Panc1 (cell line): ENCODE measurements at regions of chr10 and their contacts with region 1.

Region 1: DNA sequence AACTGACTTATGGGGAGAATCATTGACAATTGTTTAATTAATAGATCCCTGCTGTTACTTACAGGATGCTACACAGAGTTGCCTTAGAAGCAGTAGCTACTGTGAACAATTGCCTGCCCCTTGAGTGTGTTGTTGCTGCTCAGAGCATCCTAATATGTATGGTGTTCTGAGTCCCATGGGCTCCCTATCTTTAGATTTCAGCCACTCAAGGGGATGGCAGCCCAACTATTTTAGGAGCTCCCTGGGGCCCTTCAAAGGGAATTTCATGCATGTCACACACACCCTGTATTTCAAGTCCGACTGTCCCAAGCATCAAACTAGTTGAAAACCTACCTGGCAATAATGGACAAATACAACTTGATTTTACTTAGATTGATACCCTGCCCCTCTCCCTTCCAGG is 111.2 kb downstream of the NOC3L start:
- DNase-seq: no peak
- ATAC-seq: no peak
- H3K4me3 ChIP-seq: no peak overlapping the region
- H3K27ac ChIP-seq: no peak overlapping the region
- H3K4me1 ChIP-seq: no peaks in the 10 kb centered on the region
- H3K27me3 ChIP-seq: no peaks in the 10 kb centered on the region
- CTCF ChIP-seq: no peak

Region 2: DNA sequence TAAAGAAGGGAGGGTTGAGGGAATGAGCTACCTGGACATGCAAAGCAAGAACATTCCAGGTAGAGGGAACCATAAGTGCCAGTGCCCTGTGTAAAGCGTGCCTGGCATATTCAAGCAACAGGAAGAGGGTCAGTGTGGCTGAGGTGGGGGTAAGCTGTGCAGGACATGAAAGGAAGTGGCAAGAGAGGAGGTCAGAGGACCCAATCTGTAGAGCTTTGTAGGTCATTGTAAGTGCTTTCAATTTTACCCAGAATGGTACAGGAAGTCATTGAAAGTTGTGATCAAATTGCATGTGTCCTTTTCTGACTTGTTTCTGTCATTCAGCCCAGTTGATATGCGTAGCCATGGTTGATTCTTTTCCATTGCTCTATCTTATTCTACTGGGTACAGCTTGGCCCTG is 45.4 kb before region 1 on chr10:
- CTCF ChIA-PET with region 1: interaction called, 10 read pairs
- POLR2A ChIA-PET with region 1: no interaction called
- in situ Hi-C with region 1: no loop called
- intact Hi-C with region 1: no loop called
- DNase-seq: no peak
- ATAC-seq: peak; percentile 30; the same call in 1 of the 2 replicates
- H3K4me3 ChIP-seq: no peak overlapping the region
- H3K27ac ChIP-seq: no peak overlapping the region
- H3K4me1 ChIP-seq: no peaks in the 10 kb centered on the region
- H3K27me3 ChIP-seq: no peaks in the 10 kb centered on the region
- CTCF ChIP-seq: no peak

Region 3: DNA sequence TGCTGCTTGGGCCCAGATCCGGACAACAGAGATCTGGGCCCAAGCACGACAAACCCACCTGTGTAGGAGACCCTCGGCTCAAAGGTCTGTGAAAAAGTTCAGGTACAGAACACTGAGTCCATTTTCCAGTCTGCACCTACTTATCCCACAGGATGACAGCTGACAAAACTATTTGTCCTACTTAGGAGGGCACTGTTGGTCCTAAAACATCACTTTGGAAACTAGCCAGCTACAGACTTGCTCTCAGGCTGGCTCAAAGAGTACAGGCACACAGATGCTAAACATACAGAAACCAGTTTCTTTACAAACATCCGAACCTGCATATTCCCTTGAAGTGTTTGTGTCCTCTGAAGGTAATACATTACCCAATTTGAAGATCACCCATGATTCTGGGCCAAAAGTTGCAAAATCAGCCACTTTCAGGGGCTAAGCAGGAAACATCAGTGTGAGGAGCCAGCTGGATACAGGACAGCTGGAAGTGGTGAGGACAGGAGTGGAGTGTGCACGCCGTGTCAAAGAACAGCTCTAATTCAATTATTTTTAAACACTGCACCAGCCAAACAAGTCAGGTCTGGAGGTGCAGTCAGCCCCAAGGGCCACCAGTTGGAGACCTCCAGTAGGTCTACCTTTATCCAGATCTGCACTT is 22.7 kb after region 1 on chr10:
- CTCF ChIA-PET with region 1: no interaction called
- POLR2A ChIA-PET with region 1: no interaction called
- in situ Hi-C with region 1: no loop called
- intact Hi-C with region 1: no loop called
- DNase-seq: no peak
- ATAC-seq: no peak
- H3K4me3 ChIP-seq: no peak overlapping the region
- H3K27ac ChIP-seq: no peak overlapping the region
- H3K4me1 ChIP-seq: no peaks in the 10 kb centered on the region; the same call in 1 of the 2 replicates
- H3K27me3 ChIP-seq: no peaks in the 10 kb centered on the region
- CTCF ChIP-seq: no peak

Region 4: DNA sequence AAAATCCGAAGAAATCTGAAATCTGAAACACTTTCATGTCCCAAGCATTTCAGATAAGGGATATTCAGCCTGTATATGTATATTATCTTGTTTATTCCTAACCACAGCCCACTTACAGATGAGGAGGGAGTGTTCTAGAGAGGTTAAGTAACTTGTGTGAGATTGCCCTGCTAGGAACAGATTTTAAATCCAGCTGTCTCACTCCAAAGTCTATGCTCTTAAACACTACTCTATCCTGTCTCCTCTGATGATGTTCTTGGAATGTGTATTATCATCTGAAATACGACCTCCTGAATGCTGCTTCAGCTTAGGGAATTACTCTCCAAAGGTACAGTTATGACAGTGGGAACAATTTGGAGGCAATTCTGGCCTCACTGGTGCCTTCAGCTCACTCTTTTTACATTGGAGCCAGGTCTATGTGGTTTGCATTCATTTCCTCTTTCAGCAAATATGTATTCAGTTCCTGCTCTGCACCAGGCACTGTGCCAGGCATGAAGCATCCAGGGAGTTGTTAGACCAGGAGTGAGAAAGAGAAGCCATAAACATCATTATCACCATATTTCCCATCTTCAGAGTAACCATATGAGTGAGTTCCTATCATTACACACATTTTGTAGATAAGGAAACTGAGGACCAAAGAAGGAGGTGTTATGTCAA is 41.0 kb after region 1 on chr10:
- CTCF ChIA-PET with region 1: no interaction called
- POLR2A ChIA-PET with region 1: no interaction called
- in situ Hi-C with region 1: no loop called
- intact Hi-C with region 1: no loop called
- DNase-seq: no peak
- ATAC-seq: no peak
- H3K4me3 ChIP-seq: no peak overlapping the region
- H3K27ac ChIP-seq: no peak overlapping the region
- H3K4me1 ChIP-seq: no peaks in the 10 kb centered on the region
- H3K27me3 ChIP-seq: no peaks in the 10 kb centered on the region
- CTCF ChIP-seq: no peak